Prostate gland (tissue), 2 donors: ENCODE measurements at regions of chr11 and their contacts with region 1.

Region 1: GRCh38 chr11:1832211-1832919 is 2.4 kb upstream of the SYT8 start:
- DNase-seq: no peak
- H3K4me3 ChIP-seq: no peak overlapping the region
- H3K27ac ChIP-seq: no peak overlapping the region
- H3K4me1 ChIP-seq: peaks cover 8% of the 10 kb centered on the region
- H3K27me3 ChIP-seq: peaks cover 5% of the 10 kb centered on the region
- CTCF ChIP-seq: peak; percentile 93 to 97 (median 96)
- POLR2A ChIP-seq: no peak

Region 2: GRCh38 chr11:1515082-1516060 is 317.0 kb before region 1 on chr11:
- intact Hi-C with region 1: no loop called
- DNase-seq: peak; percentile 72
- H3K4me3 ChIP-seq: no peak overlapping the region
- H3K27ac ChIP-seq: peak overlapping the region in 1 of 2 donors; percentile 13
- H3K4me1 ChIP-seq: peaks cover 16% of the 10 kb centered on the region
- H3K27me3 ChIP-seq: no peaks in the 10 kb centered on the region
- CTCF ChIP-seq: peak; percentile 89 to 97 (median 96)
- POLR2A ChIP-seq: no peak

Region 3: GRCh38 chr11:1694064-1694845 is 138.1 kb before region 1 on chr11:
- intact Hi-C with region 1: loop called (anchors 1 kb)
- DNase-seq: peak; percentile 72
- H3K4me3 ChIP-seq: peak overlapping the region in 1 of 2 donors; percentile 26
- H3K27ac ChIP-seq: no peak overlapping the region
- H3K4me1 ChIP-seq: peaks cover 7% of the 10 kb centered on the region
- H3K27me3 ChIP-seq: no peaks in the 10 kb centered on the region
- CTCF ChIP-seq: peak; percentile 87 to 96 (median 92)
- POLR2A ChIP-seq: no peak